Heart left ventricle (tissue), 16 donors: ENCODE measurements at regions of chr11 and their contacts with region 1.

Region 1: GRCh38 chr11:134068829-134069425 is at the start of gene JAM3:
- DNase-seq: peak; percentile 97 to 98 (median 97)
- ATAC-seq: peak; percentile 88 to 98 (median 98)
- H3K4me3 ChIP-seq: peak within 1 kb of the TSS; percentile 55 to 97 (median 79)
- H3K27ac ChIP-seq: peak within 1 kb of the TSS; percentile 59 to 92 (median 82)
- H3K4me1 ChIP-seq: peaks cover 0 to 25% (median 11%) of the 10 kb centered on the region in 12 donors
- H3K27me3 ChIP-seq: peaks cover 0 to 14% (median 0%) of the 10 kb centered on the region in 9 donors
- CTCF ChIP-seq: no peak
- POLR2A ChIP-seq: peak in 1 of 2 donors; percentile 91
- total RNA-seq, gene JAM3: 23.4 to 56.9 (median 34.3) TPM

Region 2: DNA sequence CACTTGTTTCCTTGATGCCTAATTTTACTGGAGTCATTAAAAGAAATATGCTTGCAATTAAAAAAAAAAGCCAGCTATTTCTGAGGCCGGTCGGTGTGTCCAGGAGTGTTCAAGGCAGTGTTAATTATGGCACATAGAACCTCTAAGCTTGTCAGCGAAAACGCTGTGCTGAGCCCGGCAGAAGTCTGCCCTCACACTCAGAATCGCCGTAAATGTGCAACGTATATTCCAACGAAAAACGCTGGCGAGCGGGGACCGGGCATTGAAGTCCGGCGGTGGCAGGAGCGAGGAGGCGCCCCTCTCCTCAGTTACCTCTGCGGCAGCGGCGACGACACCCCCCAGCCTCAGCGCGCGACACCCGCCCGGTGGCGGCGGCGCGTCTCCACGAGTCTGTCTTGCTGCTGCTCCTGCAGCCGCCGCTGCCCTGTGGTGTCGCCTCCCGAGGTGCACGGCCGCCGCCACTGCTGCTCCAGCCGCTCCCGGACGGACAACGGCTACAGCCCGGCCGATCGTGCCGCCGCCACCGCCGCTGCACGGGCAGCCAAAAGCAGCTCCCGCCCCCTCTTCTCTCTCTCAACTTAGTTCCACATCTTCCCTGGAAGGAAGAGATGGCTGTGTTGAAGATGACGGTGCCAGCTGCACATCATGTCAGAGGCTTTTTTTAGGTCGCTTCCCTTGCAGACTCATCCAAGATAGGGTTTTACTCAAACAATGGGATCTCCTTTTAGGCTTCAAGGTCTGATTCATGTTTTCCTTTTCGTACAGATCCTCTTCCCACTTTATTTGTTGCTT is 55.9 kb after region 1 on chr11:
- intact Hi-C with region 1: loop called in 6 of 10 experiments (anchors 2 to 5 kb)
- DNase-seq: peak; percentile 62 to 79 (median 66)
- ATAC-seq: peak; percentile 54 to 75 (median 66)
- H3K4me3 ChIP-seq: peak overlapping the region; percentile 28 to 68 (median 54)
- H3K27ac ChIP-seq: peak overlapping the region; percentile 55 to 85 (median 76)
- H3K4me1 ChIP-seq: peaks cover 6 to 64% (median 48%) of the 10 kb centered on the region in 12 donors
- H3K27me3 ChIP-seq: peaks cover 0 to 8% (median 0%) of the 10 kb centered on the region in 9 donors
- CTCF ChIP-seq: peak in 4 of 12 donors; percentile 5 to 42 (median 32)
- POLR2A ChIP-seq: no peak